A673 (cell line): ENCODE measurements at regions of chr2 and their contacts with region 1.

Region 1: DNA sequence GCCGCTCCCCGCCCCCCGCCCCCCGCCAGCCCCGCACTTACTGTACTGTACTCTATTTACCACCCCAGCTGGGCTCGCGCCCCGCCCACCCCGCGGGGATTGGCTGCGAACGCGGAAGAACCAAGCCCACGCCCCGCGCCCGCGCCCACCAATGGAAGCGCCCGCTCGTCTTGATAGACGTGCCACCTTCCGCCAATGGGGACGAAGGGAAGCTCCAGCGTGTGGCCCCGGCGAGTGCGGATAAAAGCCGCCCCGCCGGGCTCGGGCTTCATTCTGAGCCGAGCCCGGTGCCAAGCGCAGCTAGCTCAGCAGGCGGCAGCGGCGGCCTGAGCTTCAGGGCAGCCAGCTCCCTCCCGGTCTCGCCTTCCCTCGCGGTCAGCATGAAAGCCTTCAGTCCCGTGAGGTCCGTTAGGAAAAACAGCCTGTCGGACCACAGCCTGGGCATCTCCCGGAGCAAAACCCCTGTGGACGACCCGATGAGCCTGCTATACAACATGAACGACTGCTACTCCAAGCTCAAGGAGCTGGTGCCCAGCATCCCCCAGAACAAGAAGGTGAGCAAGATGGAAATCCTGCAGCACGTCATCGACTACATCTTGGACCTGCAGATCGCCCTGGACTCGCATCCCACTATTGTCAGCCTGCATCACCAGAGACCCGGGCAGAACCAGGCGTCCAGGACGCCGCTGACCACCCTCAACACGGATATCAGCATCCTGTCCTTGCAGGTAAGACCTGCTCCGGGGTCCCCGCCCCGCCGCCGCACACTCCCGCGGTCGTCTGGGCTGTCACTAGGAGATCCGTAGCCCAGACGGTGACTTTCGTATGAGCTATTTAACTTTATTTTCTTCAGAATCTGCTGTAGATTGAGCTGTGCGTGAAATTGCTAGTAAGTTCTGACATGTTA is at the start of gene ID2:
- DNase-seq: peak; percentile 100
- H3K4me3 ChIP-seq: peak within 1 kb of the TSS; percentile 87
- H3K27ac ChIP-seq: peak within 1 kb of the TSS; percentile 100
- H3K4me1 ChIP-seq: peaks cover 33% of the 10 kb centered on the region
- H3K27me3 ChIP-seq: no peaks in the 10 kb centered on the region
- CTCF ChIP-seq: no peak
- total RNA-seq, gene ID2: 235 and 249 TPM in 2 replicates

Region 2: DNA sequence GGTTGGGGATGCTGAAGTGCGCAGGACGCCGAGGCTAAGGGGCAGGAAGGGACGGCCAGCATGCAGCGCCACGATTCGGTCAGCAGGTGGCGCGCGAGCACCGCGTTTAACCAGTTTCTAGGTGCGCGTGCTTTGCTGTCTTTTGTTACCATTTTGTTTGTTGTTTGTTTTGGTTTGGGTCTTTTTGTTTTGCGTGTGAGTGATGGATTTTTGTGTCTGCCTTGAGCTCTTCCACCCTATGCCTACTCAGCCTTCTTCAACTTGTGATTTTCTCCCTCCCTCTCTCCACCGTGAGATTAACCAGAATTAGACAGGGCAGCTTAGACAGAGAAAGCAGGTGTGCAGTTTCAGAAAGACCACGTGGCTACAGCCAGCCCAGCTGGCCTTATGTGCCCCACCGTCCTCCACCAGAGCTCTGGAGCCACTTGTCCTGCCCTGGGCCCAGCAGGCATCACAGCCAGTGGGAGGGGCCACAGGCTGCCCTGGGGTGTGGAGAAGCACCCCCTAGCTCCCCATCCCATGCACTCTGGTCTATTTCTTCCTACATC is 1584.6 kb before region 1 on chr2:
- CTCF ChIA-PET with region 1: interaction called, 4 read pairs
- POLR2A ChIA-PET with region 1: interaction called, 4 read pairs
- intact Hi-C with region 1: loop called (anchors 5 kb)
- DNase-seq: peak; percentile 80
- H3K4me3 ChIP-seq: peak overlapping the region; percentile 18
- H3K27ac ChIP-seq: no peak overlapping the region
- H3K4me1 ChIP-seq: peaks cover 12% of the 10 kb centered on the region
- H3K27me3 ChIP-seq: no peaks in the 10 kb centered on the region
- CTCF ChIP-seq: peak; percentile 99

Region 3: GRCh38 chr2:7191932-7192331 is 1490.1 kb before region 1 on chr2:
- CTCF ChIA-PET with region 1: no interaction called
- POLR2A ChIA-PET with region 1: no interaction called
- intact Hi-C with region 1: loop called (anchors 5 kb)
- DNase-seq: peak; percentile 96
- H3K4me3 ChIP-seq: no peak overlapping the region
- H3K27ac ChIP-seq: peak overlapping the region; percentile 93
- H3K4me1 ChIP-seq: peaks cover 82% of the 10 kb centered on the region
- H3K27me3 ChIP-seq: no peaks in the 10 kb centered on the region
- CTCF ChIP-seq: no peak

Region 4: GRCh38 chr2:7427293-7428060 is 1254.6 kb before region 1 on chr2:
- CTCF ChIA-PET with region 1: interaction called, 3 read pairs
- POLR2A ChIA-PET with region 1: no interaction called
- intact Hi-C with region 1: loop called (anchors 1 kb)
- DNase-seq: peak; percentile 85
- H3K4me3 ChIP-seq: no peak overlapping the region
- H3K27ac ChIP-seq: no peak overlapping the region
- H3K4me1 ChIP-seq: peaks cover 8% of the 10 kb centered on the region
- H3K27me3 ChIP-seq: no peaks in the 10 kb centered on the region
- CTCF ChIP-seq: peak; percentile 79

Region 5: DNA sequence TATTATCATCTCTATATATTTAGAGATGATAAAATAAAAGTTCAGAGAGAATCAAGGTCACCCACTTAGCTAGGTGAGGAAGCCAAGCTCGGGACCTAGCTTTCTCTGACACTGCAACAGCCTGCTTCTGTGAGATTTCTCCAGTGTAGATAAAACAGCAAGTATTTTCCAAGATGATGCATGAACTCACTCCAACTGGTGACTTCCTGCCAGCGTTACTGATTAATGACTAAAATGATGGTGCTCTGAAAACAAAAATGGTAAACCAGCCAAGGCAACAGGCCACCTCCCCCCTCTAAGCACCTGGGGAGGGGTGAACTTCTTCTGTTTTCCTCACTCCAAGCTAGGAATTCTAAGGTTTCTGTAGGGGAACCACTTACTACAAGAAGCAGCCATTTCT is 510.4 kb before region 1 on chr2:
- CTCF ChIA-PET with region 1: no interaction called
- POLR2A ChIA-PET with region 1: no interaction called
- intact Hi-C with region 1: loop called (anchors 5 kb)
- DNase-seq: peak; percentile 22
- H3K4me3 ChIP-seq: no peak overlapping the region
- H3K27ac ChIP-seq: peak overlapping the region; percentile 73
- H3K4me1 ChIP-seq: peaks cover 46% of the 10 kb centered on the region
- H3K27me3 ChIP-seq: no peaks in the 10 kb centered on the region
- CTCF ChIP-seq: no peak

Region 6: GRCh38 chr2:8312861-8313830 is 368.9 kb before region 1 on chr2:
- CTCF ChIA-PET with region 1: no interaction called
- POLR2A ChIA-PET with region 1: no interaction called
- intact Hi-C with region 1: loop called (anchors 10 kb)
- DNase-seq: peak; percentile 90
- H3K4me3 ChIP-seq: no peak overlapping the region
- H3K27ac ChIP-seq: peak overlapping the region; percentile 57
- H3K4me1 ChIP-seq: peaks cover 20% of the 10 kb centered on the region
- H3K27me3 ChIP-seq: no peaks in the 10 kb centered on the region
- CTCF ChIP-seq: no peak

Region 7: GRCh38 chr2:8395718-8396117 is 286.3 kb before region 1 on chr2:
- CTCF ChIA-PET with region 1: no interaction called
- POLR2A ChIA-PET with region 1: interaction called, 3 read pairs
- intact Hi-C with region 1: loop called (anchors 2 kb)
- DNase-seq: peak; percentile 77
- H3K4me3 ChIP-seq: no peak overlapping the region
- H3K27ac ChIP-seq: peak overlapping the region; percentile 72
- H3K4me1 ChIP-seq: peaks cover 38% of the 10 kb centered on the region
- H3K27me3 ChIP-seq: no peaks in the 10 kb centered on the region
- CTCF ChIP-seq: no peak

Region 8: DNA sequence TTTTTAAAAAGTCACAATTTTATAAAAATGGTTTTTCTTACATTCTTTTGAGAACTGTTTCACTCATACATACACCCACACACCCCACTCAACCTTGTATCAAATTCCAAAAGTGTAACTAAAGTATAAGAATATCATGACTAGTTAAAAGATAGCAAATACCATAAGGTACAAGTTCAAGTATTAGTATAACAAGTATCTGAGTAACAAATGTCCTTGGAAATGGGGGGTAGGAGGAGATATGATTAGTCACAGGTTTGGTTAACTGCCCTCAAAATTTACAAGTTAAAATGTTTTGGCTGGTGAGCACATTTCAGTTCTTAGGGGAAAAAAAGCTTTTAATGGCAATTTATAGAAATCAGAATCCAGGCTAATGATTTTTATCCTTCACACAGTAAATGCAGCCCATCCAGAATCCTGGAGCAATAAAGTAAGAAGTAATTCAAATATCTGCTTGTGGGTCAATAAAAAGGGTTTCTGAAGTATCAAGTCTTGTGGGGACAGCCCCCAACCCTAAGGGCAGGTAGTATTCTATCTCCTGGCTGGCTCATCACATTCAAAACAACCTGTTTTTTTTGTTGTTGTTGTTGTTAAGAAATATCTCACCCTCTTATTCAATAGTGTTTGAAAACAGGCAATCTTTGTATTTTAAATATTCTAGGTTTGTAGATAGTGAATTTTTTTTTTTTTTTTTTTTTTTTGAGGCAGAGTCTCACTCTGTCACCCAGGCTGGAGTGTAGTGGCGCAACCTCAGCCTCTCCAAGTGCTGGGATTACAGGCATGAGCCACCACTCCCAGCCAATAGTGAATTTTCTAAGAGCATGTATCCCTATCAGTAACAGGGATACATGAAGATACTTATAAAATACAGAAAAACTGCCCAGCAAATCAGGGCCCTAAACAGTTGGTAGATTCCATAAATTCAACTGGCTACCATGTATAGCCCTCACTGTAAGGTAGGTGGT is 806.8 kb after region 1 on chr2:
- CTCF ChIA-PET with region 1: no interaction called
- POLR2A ChIA-PET with region 1: no interaction called
- intact Hi-C with region 1: no loop called
- DNase-seq: no peak
- H3K4me3 ChIP-seq: no peak overlapping the region
- H3K27ac ChIP-seq: no peak overlapping the region
- H3K4me1 ChIP-seq: no peaks in the 10 kb centered on the region
- H3K27me3 ChIP-seq: no peaks in the 10 kb centered on the region
- CTCF ChIP-seq: no peak